GM12878 (cell line): ENCODE measurements at regions of chr14 and their contacts with region 1.

Region 1: GRCh38 chr14:22531451-22532344 is 57.3 kb downstream of the DAD1 start:
- DNase-seq: peak; percentile 93
- ATAC-seq: peak; percentile 70
- H3K4me3 ChIP-seq: peak overlapping the region; percentile 67
- H3K27ac ChIP-seq: peak overlapping the region; percentile 97
- H3K4me1 ChIP-seq: peaks cover 72% of the 10 kb centered on the region
- H3K27me3 ChIP-seq: no peaks in the 10 kb centered on the region
- CTCF ChIP-seq: no peak
- EP300 ChIP-seq: peak in 1 of 2 experiments; percentile 93; a peak in 2 of 4 replicates
- POLR2A ChIP-seq: peak; percentile 67
- RAD21 ChIP-seq: 0 out of 2 replicates have a peak, but pooled peaks have one; percentile 5

Region 2: GRCh38 chr14:22380571-22381407 is 150.9 kb before region 1 on chr14:
- CTCF ChIA-PET with region 1: interaction called, 3 read pairs
- POLR2A ChIA-PET with region 1: interaction called, 14 read pairs
- RAD21 ChIA-PET with region 1: interaction called, 10 read pairs
- SMC1A ChIA-PET with region 1: interaction called, 23 read pairs
- in situ Hi-C with region 1: no loop called
- intact Hi-C with region 1: no loop called
- DNase-seq: no peak
- ATAC-seq: no peak
- H3K4me3 ChIP-seq: no peak overlapping the region
- H3K27ac ChIP-seq: no peak overlapping the region
- H3K4me1 ChIP-seq: peaks cover 39% of the 10 kb centered on the region
- H3K27me3 ChIP-seq: no peaks in the 10 kb centered on the region
- CTCF ChIP-seq: no peak
- EP300 ChIP-seq: no peak
- POLR2A ChIP-seq: no peak
- RAD21 ChIP-seq: no peak

Region 3: GRCh38 chr14:22483863-22484593 is 47.7 kb before region 1 on chr14:
- CTCF ChIA-PET with region 1: interaction called, 25 read pairs
- POLR2A ChIA-PET with region 1: interaction called, 96 read pairs
- RAD21 ChIA-PET with region 1: interaction called, 95 read pairs
- SMC1A ChIA-PET with region 1: interaction called, 139 read pairs
- in situ Hi-C with region 1: no loop called
- intact Hi-C with region 1: no loop called
- DNase-seq: no peak
- ATAC-seq: peak; percentile 39
- H3K4me3 ChIP-seq: peak overlapping the region; percentile 72
- H3K27ac ChIP-seq: peak overlapping the region; percentile 98
- H3K4me1 ChIP-seq: peaks cover 84% of the 10 kb centered on the region
- H3K27me3 ChIP-seq: no peaks in the 10 kb centered on the region
- CTCF ChIP-seq: no peak
- EP300 ChIP-seq: no peak
- POLR2A ChIP-seq: peak; percentile 52
- RAD21 ChIP-seq: no peak

Region 4: GRCh38 chr14:22497144-22497423 is 34.6 kb before region 1 on chr14:
- CTCF ChIA-PET with region 1: interaction called, 12 read pairs
- POLR2A ChIA-PET with region 1: interaction called, 339 read pairs
- RAD21 ChIA-PET with region 1: interaction called, 27 read pairs
- SMC1A ChIA-PET with region 1: interaction called, 139 read pairs
- in situ Hi-C with region 1: no loop called
- intact Hi-C with region 1: no loop called
- DNase-seq: no peak
- ATAC-seq: peak; percentile 18
- H3K4me3 ChIP-seq: 0 out of 2 replicates have a peak overlapping the region, but pooled peaks have one; percentile 35
- H3K27ac ChIP-seq: peak overlapping the region; percentile 65
- H3K4me1 ChIP-seq: peaks cover 62% of the 10 kb centered on the region
- H3K27me3 ChIP-seq: no peaks in the 10 kb centered on the region
- CTCF ChIP-seq: no peak
- EP300 ChIP-seq: no peak
- POLR2A ChIP-seq: no peak
- RAD21 ChIP-seq: no peak

Region 5: GRCh38 chr14:22549981-22550673 is 18.4 kb after region 1 on chr14:
- CTCF ChIA-PET with region 1: interaction called, 58 read pairs
- POLR2A ChIA-PET with region 1: interaction called, 74 read pairs
- RAD21 ChIA-PET with region 1: interaction called, 48 read pairs
- SMC1A ChIA-PET with region 1: interaction called, 105 read pairs
- in situ Hi-C with region 1: no loop called
- intact Hi-C with region 1: no loop called
- DNase-seq: peak; percentile 87
- ATAC-seq: peak; percentile 85
- H3K4me3 ChIP-seq: no peak overlapping the region; the same call in 1 of the 2 replicates
- H3K27ac ChIP-seq: peak overlapping the region; percentile 97
- H3K4me1 ChIP-seq: peaks cover 61% of the 10 kb centered on the region
- H3K27me3 ChIP-seq: no peaks in the 10 kb centered on the region
- CTCF ChIP-seq: no peak
- EP300 ChIP-seq: peak; percentile 60 to 82; a peak in 2 of 4 replicates
- POLR2A ChIP-seq: peak; percentile 53; the same call in 1 of the 2 replicates
- RAD21 ChIP-seq: no peak; the same call in 1 of the 2 replicates

Region 6: DNA sequence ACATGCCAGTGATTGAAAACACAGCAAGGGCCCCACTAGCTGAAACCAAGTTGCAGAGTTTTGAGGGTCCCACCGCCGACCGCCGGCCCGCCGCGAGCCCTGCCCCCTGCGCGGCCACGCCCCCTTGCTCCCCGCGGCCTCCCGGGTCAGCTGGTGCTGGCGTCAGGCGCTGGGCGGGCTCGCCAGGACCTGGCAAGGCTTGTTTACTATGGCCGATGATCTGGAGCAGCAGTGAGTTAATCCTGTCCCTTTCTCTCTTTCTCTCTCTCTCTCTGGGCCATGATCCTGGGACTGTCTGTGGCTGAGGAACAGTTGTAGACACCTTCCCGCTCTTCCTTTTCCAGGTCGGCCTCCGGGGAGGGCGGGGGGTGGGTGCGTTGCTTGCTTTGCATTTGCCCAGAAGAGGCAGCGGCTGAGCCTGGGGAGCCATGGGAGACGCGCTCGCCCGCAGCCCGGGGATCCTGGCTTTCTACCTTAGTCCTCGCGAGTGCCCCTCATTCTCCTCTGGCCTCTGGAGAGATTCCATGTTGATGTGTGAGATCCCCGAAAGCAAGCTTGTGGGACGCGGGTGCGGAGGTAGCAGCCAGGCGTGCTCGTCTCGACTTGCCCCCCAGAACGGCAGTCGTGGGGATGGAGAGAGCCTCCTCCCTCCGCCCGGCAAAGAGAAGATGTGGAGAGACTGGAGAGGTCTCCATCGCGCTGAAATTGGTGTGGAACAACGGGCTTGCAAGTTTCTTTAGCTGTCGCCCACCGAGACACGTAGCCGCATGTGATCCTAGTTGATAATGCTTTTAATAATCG is 66.6 kb after region 1 on chr14 and contains the start of gene ABHD4:
- CTCF ChIA-PET with region 1: no interaction called
- POLR2A ChIA-PET with region 1: no interaction called
- RAD21 ChIA-PET with region 1: no interaction called
- SMC1A ChIA-PET with region 1: no interaction called
- in situ Hi-C with region 1: no loop called
- intact Hi-C with region 1: no loop called
- DNase-seq: no peak
- ATAC-seq: peak; percentile 97
- H3K4me3 ChIP-seq: peak within 1 kb of the TSS; percentile 94
- H3K27ac ChIP-seq: peak within 1 kb of the TSS; percentile 45
- H3K4me1 ChIP-seq: peaks cover 19% of the 10 kb centered on the region
- H3K27me3 ChIP-seq: no peaks in the 10 kb centered on the region
- CTCF ChIP-seq: no peak
- EP300 ChIP-seq: no peak
- POLR2A ChIP-seq: peak; percentile 62; the same call in 1 of the 2 replicates
- RAD21 ChIP-seq: no peak
- polyA plus RNA-seq, gene ABHD4: 7.7 to 7.9 TPM

Region 7: GRCh38 chr14:22852940-22853767 is 321.5 kb after region 1 on chr14:
- CTCF ChIA-PET with region 1: no interaction called
- POLR2A ChIA-PET with region 1: no interaction called
- RAD21 ChIA-PET with region 1: no interaction called
- SMC1A ChIA-PET with region 1: no interaction called
- in situ Hi-C with region 1: no loop called
- intact Hi-C with region 1: no loop called
- DNase-seq: peak; percentile 63
- ATAC-seq: peak; percentile 95
- H3K4me3 ChIP-seq: peak overlapping the region; percentile 75
- H3K27ac ChIP-seq: peak overlapping the region; percentile 89
- H3K4me1 ChIP-seq: peaks cover 17% of the 10 kb centered on the region
- H3K27me3 ChIP-seq: no peaks in the 10 kb centered on the region
- CTCF ChIP-seq: peak; percentile 85 to 98 (median 93)
- EP300 ChIP-seq: no peak
- POLR2A ChIP-seq: no peak
- RAD21 ChIP-seq: peak; percentile 98